BJ (cell line): ENCODE measurements at regions of chr7 and their contacts with region 1.

Region 1: GRCh38 chr7:44240983-44241510 is 40.3 kb downstream of the YKT6 start:
- DNase-seq: no peak
- H3K4me3 ChIP-seq: no peak overlapping the region
- H3K27me3 ChIP-seq: no peaks in the 10 kb centered on the region
- CTCF ChIP-seq: peak; percentile 87

Region 2: DNA sequence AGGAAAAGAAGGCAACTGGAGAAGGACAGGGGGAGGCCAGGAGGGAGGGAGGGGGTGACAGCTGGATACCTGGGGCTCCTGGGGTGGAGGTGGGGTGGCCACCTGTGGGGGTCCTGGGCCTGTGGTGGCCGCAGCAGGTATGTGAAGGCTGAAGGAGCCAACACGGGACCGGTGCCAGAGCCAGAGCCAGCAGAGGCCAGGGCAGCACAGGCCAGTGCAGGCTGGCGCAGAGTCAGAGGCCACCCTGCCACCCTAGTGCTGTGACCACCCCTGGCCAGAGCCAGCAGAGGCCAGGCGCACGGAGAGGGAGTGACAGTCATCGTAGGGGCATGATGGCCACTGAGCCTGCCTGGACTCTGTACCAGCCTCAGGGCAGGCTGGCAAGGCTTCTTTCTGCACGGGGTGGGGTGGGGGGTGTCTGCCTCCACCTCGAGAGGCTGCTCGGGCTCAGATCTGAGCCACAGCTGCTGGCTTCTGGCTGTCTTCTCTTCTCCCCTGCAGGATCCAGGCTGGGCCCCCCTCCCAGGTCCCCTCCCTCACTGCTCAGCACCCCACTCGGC is 11.4 kb before region 1 on chr7:
- CTCF ChIA-PET with region 1: interaction called, 11 read pairs
- POLR2A ChIA-PET with region 1: no interaction called
- DNase-seq: no peak
- H3K4me3 ChIP-seq: no peak overlapping the region
- H3K27me3 ChIP-seq: peaks cover 10% of the 10 kb centered on the region
- CTCF ChIP-seq: no peak

Region 3: DNA sequence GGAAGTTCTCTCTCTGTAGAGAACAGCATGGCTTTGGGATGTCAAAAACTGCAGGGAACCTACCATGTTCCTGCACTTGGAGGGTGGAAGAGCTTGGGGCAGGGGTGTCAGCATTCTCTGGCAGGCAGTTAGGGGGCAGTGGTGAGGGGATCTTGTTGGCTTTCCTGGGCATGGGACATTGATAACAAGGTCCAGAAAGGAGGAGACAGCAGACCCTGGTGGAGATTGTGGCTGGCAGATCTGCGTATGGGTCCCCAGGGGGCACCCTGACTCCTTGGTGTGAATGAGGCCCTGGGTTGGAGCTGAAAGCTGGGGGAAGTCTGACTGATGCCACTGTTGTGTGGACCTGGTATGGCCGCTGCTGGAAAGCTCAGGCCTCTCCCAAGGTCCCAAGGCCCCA is 107.3 kb after region 1 on chr7:
- CTCF ChIA-PET with region 1: interaction called, 15 read pairs
- POLR2A ChIA-PET with region 1: no interaction called
- DNase-seq: no peak
- H3K4me3 ChIP-seq: no peak overlapping the region
- H3K27me3 ChIP-seq: peaks cover 3% of the 10 kb centered on the region
- CTCF ChIP-seq: peak; percentile 68

Region 4: GRCh38 chr7:44466300-44467216 is 225.5 kb after region 1 on chr7:
- CTCF ChIA-PET with region 1: interaction called, 16 read pairs
- POLR2A ChIA-PET with region 1: no interaction called
- DNase-seq: no peak
- H3K4me3 ChIP-seq: no peak overlapping the region
- H3K27me3 ChIP-seq: no peaks in the 10 kb centered on the region
- CTCF ChIP-seq: no peak

Region 5: GRCh38 chr7:44490351-44491200 is 249.5 kb after region 1 on chr7 and contains the start of gene NUDCD3:
- CTCF ChIA-PET with region 1: interaction called, 10 read pairs
- POLR2A ChIA-PET with region 1: no interaction called
- DNase-seq: no peak
- H3K4me3 ChIP-seq: peak within 1 kb of the TSS; percentile 75
- H3K27me3 ChIP-seq: peaks cover under 1% of the 10 kb centered on the region; the same call in 1 of the 2 replicates
- CTCF ChIP-seq: peak; percentile 26; the same call in 1 of the 2 replicates
- polyA plus RNA-seq, gene NUDCD3: 78.2 and 82.8 TPM in 2 replicates

Region 6: GRCh38 chr7:44573464-44574286 is 332.6 kb after region 1 on chr7 and contains the start of gene DDX56:
- CTCF ChIA-PET with region 1: interaction called, 23 read pairs
- POLR2A ChIA-PET with region 1: no interaction called
- DNase-seq: peak; percentile 62
- H3K4me3 ChIP-seq: peak within 1 kb of the TSS; percentile 84
- H3K27me3 ChIP-seq: no peaks in the 10 kb centered on the region
- CTCF ChIP-seq: no peak
- polyA plus RNA-seq, gene DDX56: 56.8 and 77.3 TPM in 2 replicates